ENCODE measurements at regions of chr17 and their contacts with region 1.

Region 1: GRCh38 chr17:38403491-38403890 is 24.8 kb upstream of the ARHGAP23 start:
- DNase-seq: peak; percentile 58
- H3K4me3 ChIP-seq: no peak overlapping the region
- H3K27ac ChIP-seq: peak overlapping the region in 1 of 2 experiments; percentile 0; a peak in 1 of 4 replicates
- H3K4me1 ChIP-seq: peaks cover 0 to 47% of the 10 kb centered on the region in 2 experiments; a peak in 2 of 4 replicates
- H3K27me3 ChIP-seq: no peaks in the 10 kb centered on the region
- CTCF ChIP-seq: no peak
- EP300 ChIP-seq: no peak
- RAD21 ChIP-seq: no peak

Region 2: DNA sequence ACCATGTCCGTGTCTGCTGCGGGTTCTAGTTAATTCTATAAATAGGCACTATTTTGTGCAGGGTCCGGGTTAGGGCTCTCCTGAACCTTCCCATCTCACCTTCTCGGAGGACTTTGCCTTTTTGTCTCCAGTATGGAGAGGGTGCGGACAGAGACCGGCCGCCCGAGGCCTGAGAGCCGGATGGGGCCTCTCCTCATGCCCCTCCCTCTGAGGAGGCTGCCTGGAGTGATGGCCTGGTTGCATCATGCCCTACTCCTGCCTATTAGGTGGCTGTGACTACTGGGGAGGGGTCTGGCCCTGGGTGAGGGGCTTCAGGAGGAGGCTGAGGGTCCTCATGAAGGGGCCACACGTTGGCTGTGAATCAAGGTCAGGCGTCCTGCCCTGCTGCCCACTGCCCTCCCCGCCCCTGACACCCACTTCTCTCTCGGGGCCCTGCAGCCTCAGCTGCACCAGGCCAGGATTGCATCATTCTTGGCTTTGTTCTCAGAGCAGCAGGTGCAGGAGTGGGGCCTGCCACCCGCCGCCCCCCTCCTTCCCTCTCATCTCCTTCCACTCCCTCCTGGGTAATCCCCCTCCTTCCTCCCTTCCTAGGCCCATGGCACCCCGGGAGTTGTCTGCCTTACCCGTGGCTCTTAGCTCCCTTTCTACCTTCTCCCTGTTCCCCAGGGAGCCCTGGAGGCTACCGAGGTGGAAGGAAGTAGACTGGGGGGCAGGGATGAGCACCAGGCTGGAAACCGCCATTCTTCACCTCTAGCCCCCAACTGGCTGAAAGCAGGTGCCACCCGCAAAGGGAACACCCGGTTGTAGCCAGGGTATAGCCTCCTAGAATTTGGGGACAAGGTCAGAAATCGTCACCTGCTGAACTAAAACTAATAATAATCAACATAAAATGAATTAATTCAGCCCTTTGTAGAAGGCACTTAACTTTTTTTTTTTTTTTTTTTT is 12.0 kb after region 1 on chr17:
- CTCF ChIA-PET with region 1: interaction called, 41 read pairs
- POLR2A ChIA-PET with region 1: no interaction called
- DNase-seq: no peak
- H3K4me3 ChIP-seq: no peak overlapping the region
- H3K27ac ChIP-seq: peak overlapping the region in 1 of 2 experiments; percentile 58; a peak in 2 of 4 replicates
- H3K4me1 ChIP-seq: peaks cover 5 to 50% of the 10 kb centered on the region in 2 experiments; a peak in 3 of 4 replicates
- H3K27me3 ChIP-seq: no peaks in the 10 kb centered on the region
- CTCF ChIP-seq: no peak
- EP300 ChIP-seq: no peak
- RAD21 ChIP-seq: no peak

Region 3: DNA sequence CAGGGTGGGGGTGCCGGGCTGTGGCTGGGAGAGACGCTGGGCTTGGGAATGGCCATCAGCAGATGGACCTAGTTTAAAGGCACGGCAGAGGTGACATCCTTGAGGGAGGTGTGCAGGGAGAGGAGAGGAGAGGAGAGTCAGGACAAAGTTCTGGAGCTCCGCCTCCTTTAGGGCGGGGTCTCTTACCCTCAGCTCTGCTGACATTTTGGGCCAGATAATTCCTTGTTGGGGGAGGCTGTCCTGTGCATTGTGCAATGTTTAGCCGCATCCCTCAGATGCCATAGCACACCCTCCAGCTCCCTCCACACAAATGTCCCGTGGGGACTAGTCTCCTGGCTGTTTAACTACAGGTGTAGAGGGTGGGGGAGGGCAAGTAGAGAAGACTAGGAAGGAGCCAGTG is 73.1 kb after region 1 on chr17:
- CTCF ChIA-PET with region 1: no interaction called
- POLR2A ChIA-PET with region 1: no interaction called
- DNase-seq: no peak
- H3K4me3 ChIP-seq: no peak overlapping the region
- H3K27ac ChIP-seq: no peak overlapping the region
- H3K4me1 ChIP-seq: no peaks in the 10 kb centered on the region
- H3K27me3 ChIP-seq: no peaks in the 10 kb centered on the region
- CTCF ChIP-seq: no peak
- EP300 ChIP-seq: no peak
- RAD21 ChIP-seq: no peak

Measured in SK-N-SH (cell line).